ENCODE measurements at regions of chr22 and their contacts with region 1.

Region 1: GRCh38 chr22:21712894-21713712 is 22.5 kb downstream of the YPEL1 start:
- DNase-seq: peak; percentile 85
- H3K4me3 ChIP-seq: peak overlapping the region in 1 of 3 experiments; percentile 4
- H3K27ac ChIP-seq: no peak overlapping the region
- H3K4me1 ChIP-seq: peaks cover 3% of the 10 kb centered on the region
- H3K27me3 ChIP-seq: no peaks in the 10 kb centered on the region
- CTCF ChIP-seq: peak; percentile 66 to 77
- POLR2A ChIP-seq: no peak

Region 2: DNA sequence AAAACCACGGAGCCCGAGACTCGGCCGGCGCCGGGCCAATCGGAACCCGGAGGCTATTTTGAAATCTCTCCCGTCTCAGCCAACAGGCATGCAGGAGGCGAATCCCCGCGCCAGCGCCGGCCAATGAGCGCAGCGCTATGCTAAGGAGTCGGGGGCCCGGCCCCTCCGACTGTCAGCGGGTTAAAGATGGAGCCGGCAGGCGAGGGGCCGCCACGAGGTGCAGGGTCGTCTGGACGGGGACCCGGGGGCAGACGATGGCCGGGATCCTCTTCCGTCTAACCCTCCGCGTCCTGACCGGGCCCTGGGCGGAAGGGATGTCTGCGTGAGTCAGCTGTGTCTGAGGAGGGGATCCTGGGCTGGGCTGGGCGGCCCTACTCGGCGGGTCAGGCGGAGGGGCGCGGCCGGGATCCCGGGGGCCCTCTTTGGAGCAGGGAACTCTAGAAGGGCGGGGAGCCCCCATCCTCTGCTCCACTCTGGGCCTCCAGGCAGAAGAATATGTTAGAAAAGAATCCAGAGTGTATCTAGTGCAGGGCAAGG is 61.0 kb before region 1 on chr22:
- CTCF ChIA-PET with region 1: no interaction called
- POLR2A ChIA-PET with region 1: no interaction called
- dilution Hi-C with region 1: no loop called
- intact Hi-C with region 1: no loop called
- DNase-seq: peak; percentile 92
- H3K4me3 ChIP-seq: peak overlapping the region; percentile 64 to 85 (median 66)
- H3K27ac ChIP-seq: peak overlapping the region; percentile 61
- H3K4me1 ChIP-seq: peaks cover 17% of the 10 kb centered on the region
- H3K27me3 ChIP-seq: no peaks in the 10 kb centered on the region
- CTCF ChIP-seq: no peak
- POLR2A ChIP-seq: peak; percentile 66

Region 3: DNA sequence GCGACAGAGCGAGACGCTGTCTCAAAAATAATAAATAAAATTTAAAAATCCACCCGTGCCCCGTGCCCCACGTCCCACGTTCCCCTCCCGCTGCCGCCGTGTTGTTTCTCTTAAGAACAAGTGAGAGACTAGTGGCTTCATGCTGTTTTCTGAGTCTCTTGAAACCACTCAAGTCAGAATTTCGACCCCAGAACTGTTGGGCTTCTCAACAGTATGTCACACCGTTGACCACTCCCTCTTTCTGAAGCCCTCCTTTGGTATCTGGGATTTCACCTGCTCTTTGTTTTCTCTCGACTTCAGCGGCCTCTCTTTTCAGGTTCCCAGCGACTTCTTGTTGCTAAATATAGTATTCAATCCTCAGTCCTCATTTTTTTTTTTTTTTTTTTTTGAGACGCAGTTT is 46.3 kb before region 1 on chr22:
- CTCF ChIA-PET with region 1: no interaction called
- POLR2A ChIA-PET with region 1: no interaction called
- dilution Hi-C with region 1: no loop called
- intact Hi-C with region 1: no loop called
- DNase-seq: no peak
- H3K4me3 ChIP-seq: peak overlapping the region in 2 of 3 experiments; percentile 87 to 94
- H3K27ac ChIP-seq: no peak overlapping the region
- H3K4me1 ChIP-seq: peaks cover 7% of the 10 kb centered on the region
- H3K27me3 ChIP-seq: no peaks in the 10 kb centered on the region
- CTCF ChIP-seq: no peak
- POLR2A ChIP-seq: no peak

Region 4: GRCh38 chr22:21735200-21736076 is 22.3 kb after region 1 on chr22 and contains the start of gene YPEL1:
- CTCF ChIA-PET with region 1: interaction called, 4 read pairs
- POLR2A ChIA-PET with region 1: interaction called, 3 read pairs
- dilution Hi-C with region 1: no loop called
- intact Hi-C with region 1: loop called (anchors 2 kb)
- DNase-seq: peak; percentile 98
- H3K4me3 ChIP-seq: peak within 1 kb of the TSS; percentile 48 to 66 (median 52)
- H3K27ac ChIP-seq: no peak within 1 kb of the TSS
- H3K4me1 ChIP-seq: peaks cover 7% of the 10 kb centered on the region
- H3K27me3 ChIP-seq: peaks cover 0 to 7% of the 10 kb centered on the region in 2 experiments
- CTCF ChIP-seq: no peak
- POLR2A ChIP-seq: no peak
- total RNA-seq, gene YPEL1: 6.2 and 6.5 TPM in 2 replicates

Region 5: DNA sequence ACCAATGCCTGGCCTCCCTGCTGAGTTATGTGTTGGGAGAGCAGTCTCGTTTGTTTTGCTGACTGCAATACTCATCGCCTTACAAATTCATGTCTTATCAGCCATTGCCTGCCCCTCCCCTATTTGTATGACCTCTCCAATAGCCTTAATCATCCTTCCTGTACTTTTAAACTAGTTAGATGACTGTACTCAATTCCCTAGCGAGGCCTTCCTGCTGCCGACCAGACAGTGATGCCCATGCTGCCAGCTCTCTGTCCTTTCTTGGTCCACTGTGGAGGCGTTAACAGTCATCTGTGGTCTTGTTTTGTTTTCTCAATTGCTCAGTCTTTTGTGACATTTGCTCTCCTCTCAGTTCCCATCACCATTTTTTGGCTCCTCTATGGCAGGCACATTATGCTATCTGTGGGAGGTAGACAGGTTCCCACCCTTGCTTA is 42.8 kb after region 1 on chr22:
- CTCF ChIA-PET with region 1: interaction called, 4 read pairs
- POLR2A ChIA-PET with region 1: no interaction called
- dilution Hi-C with region 1: no loop called
- intact Hi-C with region 1: loop called (anchors 5 kb)
- DNase-seq: peak; percentile 49
- H3K4me3 ChIP-seq: no peak overlapping the region
- H3K27ac ChIP-seq: peak overlapping the region; percentile 14
- H3K4me1 ChIP-seq: peaks cover 21% of the 10 kb centered on the region
- H3K27me3 ChIP-seq: no peaks in the 10 kb centered on the region
- CTCF ChIP-seq: no peak
- POLR2A ChIP-seq: no peak

Region 6: GRCh38 chr22:21917181-21917958 is 204.3 kb after region 1 on chr22:
- CTCF ChIA-PET with region 1: interaction called, 3 read pairs
- POLR2A ChIA-PET with region 1: no interaction called
- dilution Hi-C with region 1: no loop called
- intact Hi-C with region 1: loop called (anchors 2 kb)
- DNase-seq: no peak
- H3K4me3 ChIP-seq: no peak overlapping the region
- H3K27ac ChIP-seq: no peak overlapping the region
- H3K4me1 ChIP-seq: no peaks in the 10 kb centered on the region
- H3K27me3 ChIP-seq: no peaks in the 10 kb centered on the region
- CTCF ChIP-seq: no peak
- POLR2A ChIP-seq: no peak

Region 7: DNA sequence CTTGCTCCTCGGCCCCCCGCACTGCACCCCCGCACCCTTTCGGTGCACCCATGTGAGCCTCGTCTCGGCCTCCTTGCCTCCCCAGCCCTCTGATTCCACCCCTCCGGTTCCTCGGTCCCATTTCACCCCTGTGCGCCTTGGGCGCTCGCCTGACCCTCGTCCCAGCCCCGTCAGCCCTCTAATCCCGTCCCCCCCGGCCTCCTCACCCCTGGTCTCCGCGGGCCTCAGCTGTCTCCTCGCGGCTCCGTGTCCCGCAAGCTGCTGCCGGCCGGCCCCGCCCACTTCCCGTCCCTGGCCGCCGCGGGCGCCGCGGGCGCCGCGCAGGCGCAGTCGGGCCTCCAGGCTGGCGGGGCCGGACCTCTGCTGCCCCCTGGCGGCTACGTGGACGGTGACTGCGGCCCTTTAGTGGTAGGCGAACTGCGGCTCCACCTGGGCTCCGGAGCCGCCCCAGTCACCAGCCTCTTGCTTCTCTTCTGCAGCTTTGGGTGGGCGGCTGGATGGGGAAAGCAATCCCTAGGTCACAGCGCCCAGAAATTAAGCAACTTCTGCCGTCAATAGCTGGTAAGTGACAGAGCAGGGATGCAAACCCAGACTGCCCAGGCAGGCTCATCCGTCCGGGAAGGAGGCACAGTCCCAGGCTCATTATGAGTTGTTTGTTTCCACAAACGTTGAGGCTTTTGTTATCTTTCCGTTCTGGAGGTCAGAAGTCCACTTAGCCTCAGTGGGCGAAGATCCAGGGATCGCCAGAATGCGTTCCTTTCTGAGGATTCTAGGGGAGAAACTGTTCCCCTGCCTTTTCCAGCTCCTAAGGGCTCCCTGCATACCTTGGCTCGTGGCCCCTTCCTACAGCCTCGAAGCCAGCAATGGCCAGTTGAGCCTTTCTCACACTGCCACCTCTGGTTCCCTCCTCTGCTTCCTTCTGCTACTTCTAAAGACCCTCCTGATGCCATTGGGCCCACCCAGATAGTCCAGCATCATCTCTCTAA is 239.8 kb after region 1 on chr22 and contains the start of gene PPM1F:
- CTCF ChIA-PET with region 1: interaction called, 17 read pairs
- POLR2A ChIA-PET with region 1: no interaction called
- dilution Hi-C with region 1: loop called (anchors 25 kb)
- intact Hi-C with region 1: loop called (anchors 2 kb)
- DNase-seq: peak; percentile 81
- H3K4me3 ChIP-seq: peak within 1 kb of the TSS; percentile 70 to 93 (median 89)
- H3K27ac ChIP-seq: peak within 1 kb of the TSS; percentile 73
- H3K4me1 ChIP-seq: peaks cover 40% of the 10 kb centered on the region
- H3K27me3 ChIP-seq: no peaks in the 10 kb centered on the region
- CTCF ChIP-seq: peak; percentile 86 to 93
- POLR2A ChIP-seq: peak; percentile 89
- total RNA-seq, gene PPM1F: 171 and 178 TPM in 2 replicates

Region 8: DNA sequence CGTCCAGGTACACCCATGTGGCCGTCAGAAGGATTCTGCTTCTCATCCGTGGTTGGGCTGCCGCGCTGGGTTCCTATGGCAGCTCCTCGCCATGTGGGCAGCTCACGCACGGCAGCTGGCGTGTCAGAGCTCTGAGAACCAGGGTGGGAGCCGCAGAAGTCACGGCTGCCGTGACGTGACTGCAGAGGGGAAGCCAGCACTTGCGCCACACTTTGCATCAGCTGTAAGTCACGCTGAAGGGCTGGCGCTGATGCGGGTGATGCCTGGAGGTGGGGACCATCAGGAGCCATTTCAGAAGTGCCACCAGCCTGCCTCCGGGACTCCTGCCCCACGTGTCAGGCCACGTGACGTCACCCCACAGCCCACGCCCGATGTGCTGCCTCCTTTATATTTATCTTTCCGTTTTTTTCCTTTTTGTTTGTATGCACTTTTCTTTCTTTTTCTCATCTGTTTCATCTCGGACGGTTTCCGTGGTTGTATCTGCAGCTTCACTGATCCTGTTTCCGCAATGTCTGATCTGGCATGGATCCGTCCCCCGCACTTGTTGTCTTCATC is 1733.8 kb after region 1 on chr22:
- CTCF ChIA-PET with region 1: no interaction called
- POLR2A ChIA-PET with region 1: no interaction called
- dilution Hi-C with region 1: no loop called
- intact Hi-C with region 1: no loop called
- DNase-seq: no peak
- H3K4me3 ChIP-seq: no peak overlapping the region
- H3K27ac ChIP-seq: no peak overlapping the region
- H3K4me1 ChIP-seq: no peaks in the 10 kb centered on the region
- H3K27me3 ChIP-seq: no peaks in the 10 kb centered on the region
- CTCF ChIP-seq: no peak
- POLR2A ChIP-seq: no peak

Measured in endothelial cell of umbilical vein (primary cell).